Prostate gland (tissue), 2 donors: ENCODE measurements at regions of chr3 and their contacts with region 1.

Region 1: DNA sequence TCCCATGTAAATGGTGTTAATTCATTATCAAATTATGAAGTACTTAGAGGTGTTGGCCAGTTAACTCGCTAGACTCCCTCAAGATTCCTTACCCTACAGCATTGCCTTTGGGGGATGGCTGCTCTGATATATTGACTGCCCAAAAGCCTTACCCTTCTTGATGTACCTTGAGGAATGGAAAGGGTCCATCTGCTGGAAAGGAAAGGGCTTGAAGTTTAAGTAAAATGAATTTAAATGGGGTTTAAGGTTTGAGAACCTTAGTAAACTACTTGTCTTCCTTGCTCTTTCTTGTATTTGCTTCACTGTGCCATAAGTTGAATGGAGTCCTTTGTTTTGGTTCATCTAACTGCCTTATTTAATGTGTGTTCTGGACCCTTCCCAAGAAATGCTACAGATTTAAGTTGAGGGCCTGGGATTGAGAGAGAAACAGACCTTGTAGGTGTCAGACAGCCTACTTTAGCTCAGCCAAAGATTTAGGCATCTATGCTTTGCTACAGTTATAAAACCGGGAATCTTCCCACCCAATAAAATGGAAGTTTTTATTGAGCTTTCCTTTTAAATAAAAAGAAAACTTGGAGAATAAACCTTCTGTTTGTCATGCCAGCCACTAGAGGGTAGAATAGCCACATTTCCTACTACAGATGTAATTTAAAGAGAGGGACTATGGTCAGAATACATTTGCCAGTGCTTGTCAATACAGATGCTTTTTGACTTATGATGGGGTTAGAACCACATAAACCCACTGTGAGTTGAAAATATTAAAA is 25.3 kb downstream of the CMSS1 start:
- DNase-seq: no peak
- H3K4me3 ChIP-seq: no peak overlapping the region
- H3K27ac ChIP-seq: peak overlapping the region in 1 of 2 donors; percentile 38
- H3K4me1 ChIP-seq: no peaks in the 10 kb centered on the region
- H3K27me3 ChIP-seq: no peaks in the 10 kb centered on the region
- CTCF ChIP-seq: peak; percentile 25 to 85 (median 74)
- POLR2A ChIP-seq: no peak

Region 2: DNA sequence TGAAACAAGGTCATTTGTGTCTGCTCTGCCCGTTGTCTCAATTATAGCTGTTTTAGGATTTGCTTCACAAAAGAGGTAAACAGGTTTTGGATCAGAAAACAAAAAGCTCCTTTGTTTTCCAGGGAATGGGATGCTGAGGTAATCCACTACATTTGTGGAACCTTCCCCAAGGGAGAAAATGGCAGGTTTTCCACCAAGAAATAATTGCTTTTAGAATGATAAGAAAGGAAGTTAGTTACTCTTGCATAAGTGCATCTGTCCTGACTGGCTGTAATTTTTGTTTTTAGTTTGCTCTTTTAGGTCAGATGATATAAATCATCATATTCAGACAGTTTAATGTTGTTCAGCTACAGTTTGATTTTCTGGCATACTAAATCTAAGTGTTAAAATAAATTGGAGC is 403.1 kb before region 1 on chr3:
- intact Hi-C with region 1: no loop called
- DNase-seq: no peak
- H3K4me3 ChIP-seq: no peak overlapping the region
- H3K27ac ChIP-seq: no peak overlapping the region
- H3K4me1 ChIP-seq: no peaks in the 10 kb centered on the region
- H3K27me3 ChIP-seq: no peaks in the 10 kb centered on the region
- CTCF ChIP-seq: no peak
- POLR2A ChIP-seq: no peak

Region 3: DNA sequence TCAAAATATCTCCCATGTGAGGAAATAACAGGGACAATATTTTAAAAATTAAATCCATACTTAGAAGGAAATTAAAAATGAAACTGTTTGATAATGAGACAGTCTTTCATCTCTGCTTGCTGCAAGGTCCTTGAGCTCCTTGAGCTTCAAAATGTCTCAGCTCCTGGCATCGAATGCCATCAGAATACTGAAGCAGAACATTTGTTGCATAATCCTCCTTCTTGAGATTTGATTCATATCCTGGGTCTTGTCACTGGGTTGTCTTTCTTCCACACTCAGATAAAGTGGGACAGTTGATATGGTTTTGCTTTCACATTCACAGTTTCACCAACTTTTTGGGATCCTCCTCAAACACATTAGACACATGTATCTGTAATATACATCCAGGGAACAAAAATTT is 176.8 kb before region 1 on chr3:
- intact Hi-C with region 1: no loop called
- DNase-seq: no peak
- H3K4me3 ChIP-seq: no peak overlapping the region
- H3K27ac ChIP-seq: no peak overlapping the region
- H3K4me1 ChIP-seq: no peaks in the 10 kb centered on the region
- H3K27me3 ChIP-seq: no peaks in the 10 kb centered on the region
- CTCF ChIP-seq: no peak
- POLR2A ChIP-seq: no peak

Region 4: DNA sequence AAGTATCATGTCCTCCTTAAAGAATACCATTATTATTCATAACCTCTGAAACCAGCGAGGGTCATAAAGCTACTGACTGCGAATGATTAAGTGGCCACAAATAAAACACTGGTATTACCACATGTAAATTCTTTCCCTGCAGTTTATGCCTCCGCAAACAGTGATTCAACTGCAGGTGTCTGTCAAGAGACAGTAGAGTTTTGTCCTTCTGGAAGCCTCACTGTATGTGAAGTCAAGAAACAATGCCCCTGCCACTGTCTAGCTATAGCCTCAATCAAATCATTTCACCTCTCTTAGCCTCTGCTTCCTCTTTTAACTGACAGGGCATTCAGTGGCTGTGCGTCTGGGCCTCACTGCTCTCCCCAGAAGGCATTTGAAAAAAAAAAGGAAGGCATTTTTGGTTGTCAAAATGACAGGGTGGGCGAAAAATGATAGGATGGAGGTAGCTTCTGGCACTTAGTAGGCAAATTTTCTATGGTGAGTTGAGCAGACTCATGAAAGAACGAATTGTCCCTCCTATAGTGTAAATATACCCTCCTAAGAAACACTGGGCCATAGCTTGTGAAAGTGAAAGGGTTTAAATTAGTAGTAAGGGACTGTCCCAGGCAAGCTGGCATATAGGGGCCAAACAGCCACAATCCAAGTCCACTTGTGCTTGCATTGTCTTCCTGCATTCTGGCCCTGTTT is 204.6 kb after region 1 on chr3:
- intact Hi-C with region 1: loop called (anchors 10 kb)
- DNase-seq: no peak
- H3K4me3 ChIP-seq: no peak overlapping the region
- H3K27ac ChIP-seq: no peak overlapping the region
- H3K4me1 ChIP-seq: no peaks in the 10 kb centered on the region
- H3K27me3 ChIP-seq: no peaks in the 10 kb centered on the region
- CTCF ChIP-seq: no peak
- POLR2A ChIP-seq: peak; percentile 5

Region 5: DNA sequence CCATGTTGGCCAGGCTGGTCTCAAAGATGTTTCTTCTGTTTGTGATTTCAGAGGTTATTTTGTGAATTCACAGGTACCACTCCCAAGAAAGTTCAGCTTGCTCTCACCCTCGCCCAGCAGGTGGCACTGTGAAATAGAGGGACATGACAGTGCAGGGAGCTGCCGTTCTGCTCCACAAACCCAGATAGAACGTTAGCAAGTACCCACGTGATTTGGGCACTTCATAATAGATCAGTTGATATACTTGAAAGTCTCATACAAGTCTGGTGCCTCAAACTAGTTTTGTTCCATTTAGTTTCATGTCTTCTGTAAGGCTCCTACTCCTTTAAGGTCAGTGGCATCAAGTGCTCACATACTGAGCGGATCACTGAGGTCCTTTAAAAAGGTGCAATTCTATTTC is 225.8 kb after region 1 on chr3:
- intact Hi-C with region 1: loop called (anchors 5 kb)
- DNase-seq: peak; percentile 48
- H3K4me3 ChIP-seq: no peak overlapping the region
- H3K27ac ChIP-seq: no peak overlapping the region
- H3K4me1 ChIP-seq: peaks cover 3% of the 10 kb centered on the region
- H3K27me3 ChIP-seq: no peaks in the 10 kb centered on the region
- CTCF ChIP-seq: peak; percentile 60 to 68 (median 68)
- POLR2A ChIP-seq: no peak

Region 6: DNA sequence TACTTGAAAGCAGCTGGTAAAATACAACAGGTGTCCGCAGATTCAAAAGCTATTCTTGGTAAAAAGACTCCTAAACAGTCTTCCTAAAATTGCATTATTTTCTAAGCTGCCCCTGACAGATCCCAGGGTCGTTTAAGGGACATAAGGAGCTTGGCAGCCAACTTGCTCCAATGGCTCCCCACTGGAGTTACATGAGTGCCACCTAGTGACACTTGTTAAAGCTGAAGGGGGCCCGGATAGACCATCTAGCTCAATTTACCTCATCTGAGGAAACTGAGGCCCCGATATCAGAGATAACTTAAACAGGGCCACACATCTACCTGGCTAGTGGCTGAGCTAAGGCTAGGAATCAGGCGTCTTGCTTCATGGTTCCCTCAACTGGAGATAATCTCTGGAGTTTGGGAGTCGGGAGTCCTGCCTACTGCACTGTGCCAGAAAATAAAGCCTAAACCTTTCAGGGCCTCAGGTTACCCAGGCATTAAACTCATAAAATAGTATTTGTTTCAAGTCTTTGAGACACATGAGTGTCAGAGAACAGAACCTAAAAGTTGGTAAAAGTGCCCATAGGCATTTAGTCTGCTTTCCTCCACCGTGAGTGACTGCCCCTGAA is 411.3 kb after region 1 on chr3:
- intact Hi-C with region 1: loop called (anchors 2 kb)
- DNase-seq: peak; percentile 23
- H3K4me3 ChIP-seq: no peak overlapping the region
- H3K27ac ChIP-seq: no peak overlapping the region
- H3K4me1 ChIP-seq: no peaks in the 10 kb centered on the region
- H3K27me3 ChIP-seq: no peaks in the 10 kb centered on the region
- CTCF ChIP-seq: peak; percentile 27 to 73 (median 56)
- POLR2A ChIP-seq: no peak

Region 7: DNA sequence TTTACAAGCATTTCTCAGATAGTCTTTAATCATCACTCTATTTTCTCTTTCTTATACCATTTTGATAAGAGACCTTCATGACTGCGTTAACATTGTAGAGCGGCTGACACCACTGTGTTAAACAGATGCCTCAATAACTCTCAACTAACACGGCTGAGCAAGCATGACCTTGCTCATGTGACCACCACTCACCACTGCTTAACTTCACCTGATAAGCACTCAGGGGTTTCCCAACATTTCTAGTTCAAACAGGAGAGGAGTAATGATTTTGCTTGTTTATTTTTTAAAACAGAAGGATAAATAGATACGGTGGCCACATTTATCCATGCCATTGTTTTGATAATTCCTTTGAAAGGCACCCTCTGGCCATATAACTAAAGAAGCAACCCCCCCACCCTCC is 611.7 kb after region 1 on chr3:
- intact Hi-C with region 1: no loop called
- DNase-seq: no peak
- H3K4me3 ChIP-seq: no peak overlapping the region
- H3K27ac ChIP-seq: no peak overlapping the region
- H3K4me1 ChIP-seq: no peaks in the 10 kb centered on the region
- H3K27me3 ChIP-seq: no peaks in the 10 kb centered on the region
- CTCF ChIP-seq: no peak
- POLR2A ChIP-seq: no peak